ENCODE measurements at regions of chr18 and their contacts with region 1.

Region 1: GRCh38 chr18:62054929-62055498 is 131.8 kb downstream of the PIGN start:
- H3K4me3 ChIP-seq: no peak overlapping the region
- H3K27ac ChIP-seq: no peak overlapping the region
- H3K4me1 ChIP-seq: no peaks in the 10 kb centered on the region
- CTCF ChIP-seq: no peak

Region 2: DNA sequence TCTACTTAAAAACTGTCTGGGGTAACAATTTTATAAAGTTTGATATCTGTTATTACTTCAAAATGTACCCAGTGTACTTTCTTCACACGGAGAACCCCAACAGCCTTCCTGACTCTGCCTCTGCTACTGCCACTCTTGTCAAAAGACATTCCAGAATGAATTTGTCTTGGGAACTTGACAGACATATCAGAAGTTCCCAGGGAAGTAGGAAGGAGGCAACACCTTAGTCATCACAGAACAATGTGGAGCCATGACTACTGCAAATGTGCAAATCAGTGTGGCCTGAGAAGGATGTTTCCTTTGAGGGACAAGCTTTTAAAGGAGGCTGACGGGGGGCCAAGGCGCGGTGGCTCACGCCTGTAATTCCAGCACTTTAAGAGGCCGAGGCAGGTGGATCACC is 28.4 kb before region 1 on chr18:
- CTCF ChIA-PET with region 1: no interaction called
- POLR2A ChIA-PET with region 1: no interaction called
- H3K4me3 ChIP-seq: no peak overlapping the region
- H3K27ac ChIP-seq: no peak overlapping the region
- H3K4me1 ChIP-seq: no peaks in the 10 kb centered on the region
- CTCF ChIP-seq: no peak

Region 3: DNA sequence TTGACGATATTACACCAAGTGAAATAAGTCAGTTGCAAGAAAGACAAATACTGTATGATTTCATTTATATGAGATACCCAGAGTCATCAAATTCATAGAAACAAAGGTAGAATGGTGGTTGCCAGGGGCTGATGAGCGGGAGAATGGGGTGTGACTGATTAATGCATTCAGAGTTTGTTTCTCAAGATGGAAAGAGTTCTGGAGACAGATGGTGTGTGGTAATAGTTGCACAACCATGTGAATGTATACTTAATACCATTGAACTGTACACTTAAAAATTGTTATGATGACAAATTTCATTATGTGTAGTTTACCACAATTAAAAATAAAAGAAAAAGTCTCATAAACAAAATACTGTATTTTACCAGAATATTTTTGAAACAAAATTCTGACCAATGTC is 14.5 kb after region 1 on chr18:
- CTCF ChIA-PET with region 1: no interaction called
- POLR2A ChIA-PET with region 1: no interaction called
- H3K4me3 ChIP-seq: no peak overlapping the region
- H3K27ac ChIP-seq: no peak overlapping the region
- H3K4me1 ChIP-seq: no peaks in the 10 kb centered on the region
- CTCF ChIP-seq: no peak

Region 4: DNA sequence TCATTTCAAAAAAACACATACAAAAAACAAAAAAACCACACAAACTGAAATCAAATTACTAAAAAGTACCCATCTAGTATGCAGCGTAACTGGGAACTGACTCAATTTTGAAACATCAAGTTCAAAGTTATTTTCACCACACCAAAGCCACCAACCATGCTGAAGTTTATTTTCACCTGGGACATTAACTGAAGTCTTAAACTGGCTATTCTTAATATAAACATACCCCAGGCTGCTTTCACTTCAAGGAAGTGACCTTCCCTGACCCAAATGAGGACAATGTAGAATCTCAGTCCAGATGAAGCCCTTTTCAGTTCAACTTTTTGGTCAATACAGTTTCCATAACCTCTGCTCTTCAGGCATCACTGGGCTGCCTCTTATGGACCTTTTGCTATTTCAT is 47.2 kb after region 1 on chr18:
- CTCF ChIA-PET with region 1: no interaction called
- POLR2A ChIA-PET with region 1: interaction called, 10 read pairs
- H3K4me3 ChIP-seq: no peak overlapping the region
- H3K27ac ChIP-seq: no peak overlapping the region
- H3K4me1 ChIP-seq: no peaks in the 10 kb centered on the region
- CTCF ChIP-seq: no peak

Measured in HEK293 (cell line).